ENCODE measurements at regions of chr20 and their contacts with region 1.

Region 1: GRCh38 chr20:13105864-13106457 is 97.2 kb downstream of the SPTLC3 start:
- DNase-seq: no peak
- H3K4me3 Mint-ChIP-seq: no peak overlapping the region
- H3K27ac Mint-ChIP-seq: no peak overlapping the region
- H3K4me1 Mint-ChIP-seq: no peaks in the 10 kb centered on the region
- H3K27me3 Mint-ChIP-seq: no peaks in the 10 kb centered on the region

Region 2: GRCh38 chr20:12012241-12013222 is 1093.4 kb before region 1 on chr20:
- intact Hi-C with region 1: loop called (anchors 5 kb)
- DNase-seq: peak; percentile 4
- H3K4me3 Mint-ChIP-seq: no peak overlapping the region
- H3K27ac Mint-ChIP-seq: no peak overlapping the region
- H3K4me1 Mint-ChIP-seq: no peaks in the 10 kb centered on the region
- H3K27me3 Mint-ChIP-seq: peaks cover 2% of the 10 kb centered on the region

Region 3: DNA sequence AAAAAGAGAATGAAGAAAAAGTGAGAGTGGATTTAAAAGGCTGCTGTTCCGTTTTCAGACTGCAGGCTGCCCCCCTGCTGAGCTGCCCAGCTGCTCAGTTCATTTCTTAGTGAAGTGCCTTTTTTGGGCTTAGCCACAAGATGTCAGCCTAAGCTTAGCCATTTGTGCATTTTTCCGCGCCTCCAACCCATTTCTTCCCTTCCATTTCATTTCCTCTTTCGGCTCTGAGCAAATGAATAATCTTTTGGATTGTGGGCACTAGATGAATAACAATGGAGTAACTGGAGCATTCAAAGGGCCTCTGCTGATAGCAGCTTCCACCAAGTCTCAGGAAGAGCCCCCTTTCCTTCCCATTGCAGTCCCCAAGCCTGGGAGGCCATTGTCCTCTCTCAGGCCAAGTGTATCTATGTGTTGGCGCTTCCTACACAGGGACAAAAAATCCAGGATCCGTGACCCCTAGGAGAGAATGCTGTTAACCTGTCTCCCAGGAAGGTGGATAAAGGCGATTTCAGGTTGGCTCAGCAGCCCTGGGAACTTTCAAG is 180.7 kb before region 1 on chr20:
- intact Hi-C with region 1: loop called (anchors 1 kb)
- DNase-seq: no peak
- H3K4me3 Mint-ChIP-seq: no peak overlapping the region
- H3K27ac Mint-ChIP-seq: no peak overlapping the region
- H3K4me1 Mint-ChIP-seq: peaks cover 6% of the 10 kb centered on the region
- H3K27me3 Mint-ChIP-seq: peaks cover 7% of the 10 kb centered on the region

Region 4: DNA sequence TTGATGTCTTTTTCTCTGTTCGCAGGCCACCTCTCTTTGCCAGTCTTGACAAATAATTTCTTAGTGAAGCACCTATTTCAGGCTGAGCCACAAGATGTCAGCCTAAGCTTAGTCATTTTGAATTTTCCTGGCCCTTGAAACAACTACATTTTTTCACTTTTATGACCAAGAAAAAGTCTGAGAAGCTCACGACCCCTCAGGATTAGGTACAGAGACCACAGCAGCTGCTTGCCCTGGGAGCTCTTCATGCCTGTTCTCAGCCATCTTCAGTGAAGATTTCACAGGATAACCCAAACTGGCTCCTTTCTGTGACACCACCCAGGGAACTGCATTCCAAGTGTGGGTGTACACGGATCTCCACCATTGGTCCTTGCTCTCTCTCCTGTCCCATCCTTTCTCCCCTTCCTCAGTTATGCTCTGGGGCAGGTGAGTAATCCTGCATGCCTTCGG is 135.6 kb before region 1 on chr20:
- intact Hi-C with region 1: loop called (anchors 1 kb)
- DNase-seq: no peak
- H3K4me3 Mint-ChIP-seq: no peak overlapping the region
- H3K27ac Mint-ChIP-seq: no peak overlapping the region
- H3K4me1 Mint-ChIP-seq: no peaks in the 10 kb centered on the region
- H3K27me3 Mint-ChIP-seq: no peaks in the 10 kb centered on the region